Cardiac septum (tissue), 1 donor: ENCODE measurements at regions of chr19 and their contacts with region 1.

Region 1: GRCh38 chr19:49224856-49225255 is 67.3 kb downstream of the TRPM4 start:
- DNase-seq: peak; percentile 75

Region 2: GRCh38 chr19:49327878-49328544 is 103.2 kb after region 1 on chr19:
- intact Hi-C with region 1: loop called (anchors 5 kb)
- DNase-seq: no peak